HEK293 (cell line): ENCODE measurements at regions of chr7 and their contacts with region 1.

Region 1: DNA sequence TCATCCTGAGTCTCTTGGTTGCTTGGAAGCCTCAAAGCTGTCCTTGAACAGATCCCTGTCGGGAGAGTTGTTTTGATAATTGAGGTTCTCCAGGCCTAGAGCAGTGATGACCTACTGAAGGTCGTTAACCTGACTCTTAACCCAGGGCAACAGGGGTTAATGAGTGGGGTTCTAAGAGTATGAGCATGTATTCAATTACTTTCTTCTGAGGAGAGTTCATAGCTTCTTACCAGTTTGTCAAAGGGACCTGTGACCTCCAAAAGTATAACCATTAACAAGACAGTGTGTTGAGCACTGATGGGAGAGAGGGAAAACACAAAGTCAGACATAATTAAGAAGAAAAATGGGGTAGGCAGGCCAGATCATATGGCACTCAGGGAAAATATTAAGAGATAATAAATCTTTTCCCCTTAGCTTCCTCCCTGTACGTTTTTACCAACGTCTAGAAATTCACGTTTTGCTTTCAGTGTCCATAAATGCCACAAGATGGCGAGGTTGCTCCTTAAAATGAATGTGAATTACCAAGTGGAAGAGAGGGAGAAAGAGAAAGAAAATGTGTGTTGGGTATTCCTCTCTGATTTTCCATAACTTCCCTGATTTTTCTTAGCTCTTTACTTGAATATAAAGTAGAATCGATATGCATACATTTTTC is 97.6 kb downstream of the SUGCT start:
- H3K4me3 ChIP-seq: no peak overlapping the region
- H3K27ac ChIP-seq: no peak overlapping the region
- H3K4me1 ChIP-seq: no peaks in the 10 kb centered on the region
- CTCF ChIP-seq: no peak

Region 2: DNA sequence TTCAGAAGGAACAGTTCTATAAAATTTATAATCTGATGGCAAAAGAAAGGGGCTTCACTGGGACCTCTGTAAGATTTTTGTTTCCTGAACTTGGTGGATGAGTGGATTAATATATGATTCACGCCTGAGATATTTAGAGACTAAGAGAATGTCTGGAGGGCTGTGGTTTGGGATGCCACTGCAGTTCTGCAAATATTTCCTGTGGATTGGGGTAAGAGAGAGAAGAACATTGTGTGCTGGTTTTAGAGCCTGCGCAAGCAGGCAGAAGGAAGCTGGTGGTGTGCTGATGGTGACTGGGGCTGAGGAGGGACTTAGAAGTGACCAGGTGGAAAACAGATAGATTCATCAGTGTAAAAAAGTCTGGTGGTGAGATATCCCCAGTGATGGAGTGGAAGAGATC is 10.5 kb before region 1 on chr7:
- CTCF ChIA-PET with region 1: interaction called, 16 read pairs
- POLR2A ChIA-PET with region 1: no interaction called
- H3K4me3 ChIP-seq: no peak overlapping the region
- H3K27ac ChIP-seq: no peak overlapping the region
- H3K4me1 ChIP-seq: no peaks in the 10 kb centered on the region
- CTCF ChIP-seq: no peak

Region 3: DNA sequence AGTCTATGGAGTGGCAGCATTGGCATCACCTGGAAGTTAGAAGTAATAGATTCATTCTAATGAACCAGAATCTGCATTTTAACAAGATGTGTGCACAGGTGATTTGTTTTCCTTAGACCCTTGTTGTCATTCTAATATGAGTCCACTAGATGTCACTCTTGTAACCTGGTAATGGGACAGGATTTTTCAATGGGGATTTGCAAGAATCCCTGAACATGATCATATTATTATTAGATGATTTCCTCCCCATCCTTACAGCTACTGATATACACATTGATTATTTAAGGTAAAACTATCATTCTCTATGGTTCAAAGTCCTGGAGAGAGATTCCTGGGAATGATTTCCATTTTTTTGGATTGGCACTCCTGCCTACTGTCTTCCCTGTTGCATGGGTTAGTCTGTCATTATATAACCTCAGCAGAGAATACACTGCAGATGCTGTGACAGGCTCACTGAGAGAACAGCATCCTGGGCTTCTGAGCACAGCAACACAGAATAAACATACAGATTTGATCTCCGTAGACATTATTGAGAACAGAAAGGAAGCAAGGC is 97.3 kb after region 1 on chr7:
- CTCF ChIA-PET with region 1: interaction called, 12 read pairs
- POLR2A ChIA-PET with region 1: no interaction called
- H3K4me3 ChIP-seq: no peak overlapping the region
- H3K27ac ChIP-seq: no peak overlapping the region
- H3K4me1 ChIP-seq: no peaks in the 10 kb centered on the region
- CTCF ChIP-seq: no peak

Region 4: GRCh38 chr7:40923626-40924025 is 691.3 kb after region 1 on chr7:
- CTCF ChIA-PET with region 1: no interaction called
- POLR2A ChIA-PET with region 1: no interaction called
- H3K4me3 ChIP-seq: no peak overlapping the region
- H3K27ac ChIP-seq: no peak overlapping the region
- H3K4me1 ChIP-seq: no peaks in the 10 kb centered on the region
- CTCF ChIP-seq: no peak

Region 5: DNA sequence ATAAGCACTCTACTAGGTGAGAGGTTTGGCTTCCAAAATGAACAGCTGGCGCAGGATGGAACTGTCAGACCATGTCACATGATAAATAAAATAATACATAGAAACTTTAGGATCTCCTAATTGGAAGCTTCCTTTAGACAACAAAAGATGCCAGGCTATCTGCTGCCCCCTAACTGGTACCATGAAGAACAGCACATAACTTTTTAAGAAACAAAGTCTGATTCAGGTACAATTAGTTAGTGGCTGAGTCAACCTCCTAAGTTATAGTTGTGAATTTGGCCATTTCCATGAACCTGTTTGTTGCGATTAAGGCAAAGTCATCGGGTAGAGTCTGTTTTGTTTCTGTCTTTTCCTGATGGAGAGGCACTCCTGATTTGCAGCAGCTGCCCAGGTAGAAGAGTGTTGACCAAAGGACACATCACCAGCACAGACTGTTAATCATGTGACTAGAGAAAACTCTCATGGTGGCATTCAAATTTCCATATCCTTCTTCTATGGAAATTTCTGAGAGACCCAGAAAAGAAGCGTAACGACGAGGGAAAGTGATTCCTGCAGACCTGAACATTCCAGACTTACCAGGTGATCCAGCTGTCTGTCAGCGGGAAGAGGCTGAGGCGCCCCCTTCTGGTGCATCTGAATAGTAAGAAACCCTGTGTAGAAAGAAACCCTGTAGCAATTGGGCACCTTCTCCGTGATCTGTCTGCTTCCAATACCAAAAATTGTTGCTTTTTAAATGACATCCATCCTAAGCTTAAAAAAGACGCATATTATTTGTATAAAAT is 1479.1 kb after region 1 on chr7:
- CTCF ChIA-PET with region 1: interaction called, 17 read pairs
- POLR2A ChIA-PET with region 1: no interaction called
- H3K4me3 ChIP-seq: no peak overlapping the region
- H3K27ac ChIP-seq: no peak overlapping the region
- H3K4me1 ChIP-seq: no peaks in the 10 kb centered on the region
- CTCF ChIP-seq: no peak